ENCODE measurements at regions of chr6 and their contacts with region 1.

Region 1: GRCh38 chr6:88870717-88871330 is 92.6 kb downstream of the RNGTT start:
- DNase-seq: peak; percentile 73
- H3K4me3 Mint-ChIP-seq: no peak overlapping the region
- H3K27ac Mint-ChIP-seq: no peak overlapping the region
- H3K4me1 Mint-ChIP-seq: peaks cover 11% of the 10 kb centered on the region
- H3K27me3 Mint-ChIP-seq: no peaks in the 10 kb centered on the region
- CTCF ChIP-seq: peak; percentile 72

Region 2: DNA sequence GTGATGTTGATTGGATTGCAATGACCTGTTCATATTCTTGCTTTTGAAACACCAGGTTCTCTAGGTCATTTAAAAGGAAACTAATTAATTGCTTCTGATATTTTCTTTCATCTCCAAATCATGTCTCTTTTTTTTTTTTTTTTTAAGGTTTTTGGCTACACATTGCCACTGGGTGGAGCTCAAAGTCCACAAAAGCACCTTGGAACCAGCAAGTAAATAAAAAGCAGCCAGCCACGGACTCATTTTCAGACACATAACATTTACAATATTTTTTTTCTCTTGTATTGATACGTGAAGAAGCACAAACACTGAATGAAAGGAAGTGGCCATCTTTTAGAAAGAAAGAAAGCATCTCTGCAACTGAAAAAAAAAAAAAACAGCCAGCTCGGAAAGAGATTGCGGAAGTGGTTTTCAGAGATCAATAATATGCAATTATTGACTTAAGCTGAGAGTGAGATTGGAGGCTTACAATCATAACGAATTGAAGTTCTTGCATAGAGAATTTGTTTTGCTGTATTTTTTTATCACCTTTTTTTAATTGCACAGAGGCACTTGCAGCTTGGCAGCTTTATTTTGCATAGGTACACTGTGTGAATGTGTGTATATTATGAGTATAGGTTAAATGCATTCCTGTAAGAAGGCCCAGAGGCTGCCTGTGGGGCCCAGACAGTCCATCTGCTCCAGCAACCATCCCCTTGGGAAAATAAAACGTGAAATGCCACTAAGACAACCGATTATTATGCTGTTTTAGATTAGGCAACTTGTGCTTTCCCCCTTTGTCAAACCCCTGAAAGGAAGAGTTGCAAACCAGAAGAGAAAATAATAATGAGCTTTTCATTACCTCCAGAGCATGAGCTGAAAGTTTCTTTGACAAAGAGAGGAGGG is 1804.1 kb before region 1 on chr6:
- CTCF ChIA-PET with region 1: interaction called, 11 read pairs
- POLR2A ChIA-PET with region 1: no interaction called
- intact Hi-C with region 1: no loop called
- DNase-seq: peak; percentile 62
- H3K4me3 Mint-ChIP-seq: peak overlapping the region; percentile 60
- H3K27ac Mint-ChIP-seq: no peak overlapping the region
- H3K4me1 Mint-ChIP-seq: peaks cover 10% of the 10 kb centered on the region
- H3K27me3 Mint-ChIP-seq: peaks cover 41% of the 10 kb centered on the region
- CTCF ChIP-seq: peak; percentile 72

Region 3: GRCh38 chr6:87393022-87393622 is 1477.7 kb before region 1 on chr6:
- CTCF ChIA-PET with region 1: interaction called, 6 read pairs
- POLR2A ChIA-PET with region 1: no interaction called
- intact Hi-C with region 1: loop called (anchors 5 kb)
- DNase-seq: peak; percentile 58
- H3K4me3 Mint-ChIP-seq: no peak overlapping the region
- H3K27ac Mint-ChIP-seq: no peak overlapping the region
- H3K4me1 Mint-ChIP-seq: no peaks in the 10 kb centered on the region
- H3K27me3 Mint-ChIP-seq: no peaks in the 10 kb centered on the region
- CTCF ChIP-seq: peak; percentile 71

Region 4: DNA sequence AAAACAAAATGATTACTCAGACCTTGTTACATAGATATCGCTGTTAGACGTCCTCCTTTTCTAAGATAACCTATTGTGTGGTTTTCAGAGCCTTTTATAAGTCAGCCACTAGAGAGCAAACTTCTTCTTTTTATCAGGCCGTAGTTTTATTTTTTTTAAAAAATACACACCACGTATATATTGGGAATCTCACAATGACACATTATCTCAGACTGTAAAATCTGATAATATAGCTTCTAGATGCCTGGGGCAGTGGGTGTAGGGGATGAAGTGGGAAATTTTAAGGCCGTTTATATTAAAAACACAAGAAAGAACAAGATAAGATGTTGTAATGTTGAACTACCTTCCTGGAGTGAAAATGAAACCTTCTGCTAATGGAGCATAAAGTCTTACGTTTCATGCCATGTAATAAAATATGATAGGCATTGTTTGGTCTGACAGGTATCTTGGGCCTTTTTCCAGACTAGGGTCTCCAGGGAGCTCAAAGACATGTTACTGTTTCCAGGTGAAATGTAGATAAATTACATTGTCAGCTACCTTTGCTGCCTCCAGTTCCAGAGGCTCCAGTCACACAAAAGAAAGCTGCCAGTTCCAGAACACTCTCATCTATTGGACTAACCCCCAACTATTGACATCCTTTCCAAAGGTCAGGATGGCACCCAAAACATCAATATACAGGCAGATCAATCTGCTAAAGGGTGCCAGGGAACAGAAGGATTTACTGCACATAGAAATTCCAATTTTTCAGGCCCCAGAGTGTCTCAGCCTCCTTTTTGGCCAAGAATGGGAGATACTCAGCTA is 1038.6 kb before region 1 on chr6:
- CTCF ChIA-PET with region 1: interaction called, 6 read pairs
- POLR2A ChIA-PET with region 1: no interaction called
- intact Hi-C with region 1: loop called (anchors 2 kb)
- DNase-seq: peak; percentile 32
- H3K4me3 Mint-ChIP-seq: peak overlapping the region; percentile 75
- H3K27ac Mint-ChIP-seq: peak overlapping the region; percentile 76
- H3K4me1 Mint-ChIP-seq: no peaks in the 10 kb centered on the region
- H3K27me3 Mint-ChIP-seq: peaks cover 17% of the 10 kb centered on the region
- CTCF ChIP-seq: peak; percentile 6

Region 5: GRCh38 chr6:88492824-88493223 is 378.0 kb before region 1 on chr6:
- CTCF ChIA-PET with region 1: interaction called, 8 read pairs
- POLR2A ChIA-PET with region 1: no interaction called
- intact Hi-C with region 1: loop called (anchors 1 kb)
- DNase-seq: peak; percentile 46
- H3K4me3 Mint-ChIP-seq: no peak overlapping the region
- H3K27ac Mint-ChIP-seq: no peak overlapping the region
- H3K4me1 Mint-ChIP-seq: peaks cover 23% of the 10 kb centered on the region
- H3K27me3 Mint-ChIP-seq: no peaks in the 10 kb centered on the region
- CTCF ChIP-seq: peak; percentile 64

Region 6: DNA sequence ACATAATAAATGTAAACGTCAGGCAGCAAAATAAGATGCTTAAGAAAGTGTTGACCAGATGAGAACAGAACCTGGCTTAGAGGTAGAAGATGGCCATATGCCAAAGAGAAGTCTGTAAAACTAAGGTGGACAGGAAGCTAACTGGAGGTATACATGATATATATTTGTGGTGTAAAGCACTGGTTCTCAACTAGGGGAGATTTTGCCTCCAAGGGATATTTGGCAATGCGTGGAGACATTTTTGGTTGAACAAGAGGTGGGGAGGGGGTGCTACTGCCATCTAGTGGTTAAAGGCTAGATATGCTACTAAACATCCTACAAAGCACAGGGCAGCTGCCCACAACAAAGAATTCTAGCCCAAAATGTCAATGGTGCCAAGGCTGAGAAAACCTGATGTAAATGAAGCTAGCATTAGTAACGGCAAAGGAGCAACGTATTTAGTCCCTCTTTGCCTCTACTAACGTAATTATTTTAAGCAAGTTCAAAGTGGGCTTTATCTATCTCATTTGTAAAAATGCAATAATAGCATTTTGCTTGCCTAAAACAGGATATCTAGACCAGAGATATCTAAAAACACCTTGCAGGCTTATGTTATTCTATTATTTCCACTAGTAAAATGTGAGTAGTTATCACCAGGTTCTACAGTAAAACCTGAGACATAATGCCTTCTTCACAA is 90.0 kb before region 1 on chr6:
- CTCF ChIA-PET with region 1: interaction called, 5 read pairs
- POLR2A ChIA-PET with region 1: no interaction called
- intact Hi-C with region 1: loop called (anchors 1 kb)
- DNase-seq: peak; percentile 91
- H3K4me3 Mint-ChIP-seq: no peak overlapping the region
- H3K27ac Mint-ChIP-seq: no peak overlapping the region
- H3K4me1 Mint-ChIP-seq: peaks cover 5% of the 10 kb centered on the region
- H3K27me3 Mint-ChIP-seq: no peaks in the 10 kb centered on the region
- CTCF ChIP-seq: peak; percentile 70

Region 7: DNA sequence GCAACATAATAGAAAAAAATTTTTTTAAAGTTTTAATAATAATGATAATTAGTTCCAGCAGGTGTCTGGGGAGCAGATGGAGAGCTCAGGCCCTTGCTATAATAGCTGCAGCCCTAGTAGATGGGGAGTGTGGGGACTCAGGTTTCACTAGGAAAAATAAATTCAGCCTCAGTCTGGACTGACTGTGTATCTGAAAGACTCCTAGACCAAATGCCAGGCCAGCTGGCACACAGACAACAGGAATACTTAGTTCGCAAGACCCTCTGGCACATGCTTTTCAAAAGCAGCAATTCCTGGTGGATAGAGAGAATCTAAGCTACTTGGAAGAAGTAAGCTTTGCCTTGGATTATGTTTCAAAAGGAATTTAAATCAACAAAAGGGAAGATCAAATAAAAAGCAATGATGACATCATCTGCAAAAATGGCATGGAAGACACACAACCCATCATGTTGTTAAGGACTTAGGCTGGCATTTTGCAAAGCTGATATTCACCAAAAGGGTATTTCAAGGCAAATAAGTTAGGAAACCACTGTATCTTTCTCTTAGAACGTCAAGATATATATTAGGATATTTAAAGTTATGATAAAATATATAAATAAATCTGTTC is 15.2 kb before region 1 on chr6:
- CTCF ChIA-PET with region 1: interaction called, 19 read pairs
- POLR2A ChIA-PET with region 1: interaction called, 6 read pairs
- intact Hi-C with region 1: no loop called
- DNase-seq: no peak
- H3K4me3 Mint-ChIP-seq: no peak overlapping the region
- H3K27ac Mint-ChIP-seq: no peak overlapping the region
- H3K4me1 Mint-ChIP-seq: no peaks in the 10 kb centered on the region
- H3K27me3 Mint-ChIP-seq: no peaks in the 10 kb centered on the region
- CTCF ChIP-seq: no peak

Measured in MCF 10A (cell line).